Activated CD4-positive, alpha-beta memory T cell treated with anti-CD3 and anti-CD28 coated beads for 36 hours (primary cell): ENCODE measurements at regions of chr18 and their contacts with region 1.

Region 1: GRCh38 chr18:46917108-46917802 is at the starts of genes KATNAL2 and PIAS2:
- DNase-seq: peak; percentile 80
- H3K4me3 Mint-ChIP-seq: peak within 1 kb of the TSS; percentile 82
- H3K27ac Mint-ChIP-seq: peak within 1 kb of the TSS; percentile 72
- H3K4me1 Mint-ChIP-seq: peaks cover 40% of the 10 kb centered on the region
- H3K27me3 Mint-ChIP-seq: no peaks in the 10 kb centered on the region
- total RNA-seq, gene KATNAL2: 0.46 to 0.69 TPM
- total RNA-seq, gene PIAS2: 19.7 to 22.1 TPM

Region 2: GRCh38 chr18:46821856-46822711 is 95.2 kb before region 1 on chr18:
- CTCF ChIA-PET with region 1: no interaction called
- POLR2A ChIA-PET with region 1: interaction called, 4 read pairs
- intact Hi-C with region 1: loop called (anchors 5 kb)
- DNase-seq: no peak
- H3K4me3 Mint-ChIP-seq: no peak overlapping the region
- H3K27ac Mint-ChIP-seq: peak overlapping the region; percentile 23
- H3K4me1 Mint-ChIP-seq: peaks cover 12% of the 10 kb centered on the region
- H3K27me3 Mint-ChIP-seq: no peaks in the 10 kb centered on the region

Region 3: DNA sequence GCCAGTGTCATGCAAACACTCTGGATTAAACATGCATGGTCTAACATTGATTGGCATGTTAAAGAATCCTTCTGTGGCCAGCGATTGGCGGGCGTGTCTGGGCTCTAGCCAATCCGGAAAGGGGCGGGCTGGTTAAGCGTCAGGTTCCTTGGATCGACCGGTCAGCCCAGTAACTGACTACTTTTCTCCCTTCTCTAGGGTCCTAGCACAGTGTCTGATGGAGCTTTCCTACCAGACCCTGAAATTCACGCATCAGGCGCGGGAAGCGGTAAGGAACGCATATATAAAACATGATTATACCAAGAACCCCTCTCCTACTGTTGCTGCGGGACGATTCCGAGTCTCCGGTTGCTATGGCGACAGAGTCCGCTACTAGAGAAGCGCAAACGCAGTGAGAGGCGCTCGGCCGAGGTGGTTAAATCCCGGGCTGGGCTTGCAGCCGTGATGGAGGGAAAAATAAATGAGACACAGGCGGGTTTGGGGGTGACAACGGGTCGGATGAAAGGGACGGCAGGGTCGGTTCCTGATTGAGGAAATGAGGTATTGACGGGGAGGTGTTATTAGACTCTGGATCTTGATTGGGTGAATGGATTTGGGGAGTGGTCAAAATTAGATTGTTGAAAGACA is 29.5 kb after region 1 on chr18:
- CTCF ChIA-PET with region 1: no interaction called
- POLR2A ChIA-PET with region 1: no interaction called
- intact Hi-C with region 1: loop called (anchors 2 kb)
- DNase-seq: peak; percentile 78
- H3K4me3 Mint-ChIP-seq: no peak overlapping the region
- H3K27ac Mint-ChIP-seq: no peak overlapping the region
- H3K4me1 Mint-ChIP-seq: no peaks in the 10 kb centered on the region
- H3K27me3 Mint-ChIP-seq: peaks cover 12% of the 10 kb centered on the region

Region 4: GRCh38 chr18:47087676-47088075 is 170.4 kb after region 1 on chr18:
- CTCF ChIA-PET with region 1: no interaction called
- POLR2A ChIA-PET with region 1: no interaction called
- intact Hi-C with region 1: no loop called
- DNase-seq: no peak
- H3K4me3 Mint-ChIP-seq: no peak overlapping the region
- H3K27ac Mint-ChIP-seq: no peak overlapping the region
- H3K4me1 Mint-ChIP-seq: no peaks in the 10 kb centered on the region
- H3K27me3 Mint-ChIP-seq: no peaks in the 10 kb centered on the region

Region 5: DNA sequence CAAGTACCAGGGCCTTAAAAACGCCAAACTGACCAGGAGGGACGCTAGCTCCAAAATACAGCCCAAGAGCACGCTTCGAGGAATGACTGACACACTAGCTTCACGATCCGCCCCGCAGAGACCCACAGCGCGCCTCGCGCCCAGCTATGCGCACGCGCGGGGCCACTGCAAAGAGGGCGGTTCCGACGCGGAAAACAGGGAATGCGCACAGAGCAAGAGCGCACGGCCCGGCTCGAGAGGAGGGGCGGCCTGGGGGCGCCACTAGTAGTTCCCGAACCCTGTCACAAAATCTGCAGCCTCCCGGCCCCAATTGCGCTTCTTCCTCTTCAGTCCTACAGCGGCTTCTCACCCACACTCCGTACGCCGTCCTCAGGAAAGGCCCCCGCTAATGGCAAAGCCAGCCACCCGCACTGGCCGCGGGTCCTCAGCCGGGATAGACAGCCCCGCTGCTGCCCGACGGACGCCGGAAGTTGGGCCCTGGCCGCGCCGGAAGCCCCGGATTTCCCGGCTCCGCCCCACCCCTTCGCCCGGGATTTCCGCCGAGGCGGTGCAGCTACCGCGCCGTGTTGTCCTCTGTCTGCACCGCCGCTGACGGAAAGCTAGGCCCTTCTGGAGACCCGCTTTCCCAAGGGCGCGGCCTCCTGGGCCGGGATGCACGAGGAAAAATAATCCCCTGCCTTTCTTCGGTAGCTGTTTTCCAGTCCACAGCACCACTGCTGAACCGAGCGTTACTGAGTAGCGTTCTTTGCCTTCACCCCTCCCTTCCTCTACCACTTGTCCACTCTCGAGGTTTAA is 233.0 kb after region 1 on chr18 and contains the start of gene HDHD2:
- CTCF ChIA-PET with region 1: no interaction called
- POLR2A ChIA-PET with region 1: interaction called, 3 read pairs
- intact Hi-C with region 1: loop called (anchors 1 kb)
- DNase-seq: peak; percentile 88
- H3K4me3 Mint-ChIP-seq: peak within 1 kb of the TSS; percentile 89
- H3K27ac Mint-ChIP-seq: peak within 1 kb of the TSS; percentile 91
- H3K4me1 Mint-ChIP-seq: peaks cover 33% of the 10 kb centered on the region
- H3K27me3 Mint-ChIP-seq: no peaks in the 10 kb centered on the region
- total RNA-seq, gene HDHD2: 26.4 to 32.9 TPM

Region 6: GRCh38 chr18:47175908-47176575 is 258.8 kb after region 1 on chr18 and contains the start of gene IER3IP1:
- CTCF ChIA-PET with region 1: no interaction called
- POLR2A ChIA-PET with region 1: no interaction called
- intact Hi-C with region 1: loop called (anchors 10 kb)
- DNase-seq: peak; percentile 94
- H3K4me3 Mint-ChIP-seq: no peak within 1 kb of the TSS
- H3K27ac Mint-ChIP-seq: peak within 1 kb of the TSS; percentile 66
- H3K4me1 Mint-ChIP-seq: peaks cover 2% of the 10 kb centered on the region
- H3K27me3 Mint-ChIP-seq: no peaks in the 10 kb centered on the region
- total RNA-seq, gene IER3IP1: 10.9 to 11.0 TPM

Region 7: DNA sequence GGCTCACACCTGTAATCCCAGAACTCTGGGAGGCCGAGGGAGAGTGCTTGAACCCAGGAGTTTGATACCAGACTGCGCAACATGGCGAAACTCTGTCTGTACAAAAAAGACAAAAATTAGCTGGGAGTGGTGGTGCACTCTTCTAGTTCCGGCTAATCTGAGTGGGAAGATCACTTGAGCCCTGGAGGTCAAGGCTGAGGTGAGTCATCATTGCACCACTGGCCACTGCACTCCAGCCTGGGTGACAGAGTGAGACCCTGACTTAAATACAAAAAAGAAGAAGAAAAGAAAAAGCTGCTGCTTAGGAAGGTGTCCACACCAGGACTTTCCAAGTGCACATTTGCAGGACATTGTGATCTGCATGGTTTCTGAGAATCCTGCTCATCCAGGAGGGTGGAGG is 317.8 kb after region 1 on chr18:
- CTCF ChIA-PET with region 1: no interaction called
- POLR2A ChIA-PET with region 1: no interaction called
- intact Hi-C with region 1: no loop called
- DNase-seq: no peak
- H3K4me3 Mint-ChIP-seq: no peak overlapping the region
- H3K27ac Mint-ChIP-seq: no peak overlapping the region
- H3K4me1 Mint-ChIP-seq: no peaks in the 10 kb centered on the region
- H3K27me3 Mint-ChIP-seq: peaks cover 23% of the 10 kb centered on the region